ENCODE measurements at regions of chr11 and their contacts with region 1.

Region 1: DNA sequence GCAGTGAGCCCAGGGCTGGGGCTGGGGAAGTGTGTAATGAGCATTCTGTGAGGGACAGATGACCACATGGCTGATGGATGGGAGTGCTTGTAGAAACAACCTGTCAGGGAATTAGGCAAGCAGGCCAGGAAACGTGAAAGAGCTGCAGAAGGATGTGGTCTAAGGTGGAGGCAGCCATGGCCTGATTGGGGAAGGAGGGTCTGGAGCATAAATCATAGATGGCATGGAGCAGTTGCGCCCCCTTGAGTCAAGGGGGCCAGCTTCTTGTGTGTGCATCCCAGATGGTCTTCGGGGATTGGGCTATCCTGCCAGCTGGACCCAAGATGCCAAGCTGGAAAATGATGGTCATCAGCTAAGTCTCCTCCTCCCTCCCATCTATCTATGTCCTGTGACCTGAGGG is 119.4 kb upstream of the CLPB start:
- DNase-seq: no peak
- H3K4me3 ChIP-seq: no peak overlapping the region
- H3K27ac ChIP-seq: no peak overlapping the region
- H3K4me1 ChIP-seq: no peaks in the 10 kb centered on the region
- H3K27me3 ChIP-seq: peaks cover 15% of the 10 kb centered on the region
- CTCF ChIP-seq: no peak

Region 2: GRCh38 chr11:72642884-72643511 is 89.3 kb after region 1 on chr11:
- CTCF ChIA-PET with region 1: no interaction called
- POLR2A ChIA-PET with region 1: no interaction called
- intact Hi-C with region 1: no loop called
- DNase-seq: peak in 1 of 2 experiments; percentile 71
- H3K4me3 ChIP-seq: peak overlapping the region; percentile 74
- H3K27ac ChIP-seq: no peak overlapping the region
- H3K4me1 ChIP-seq: peaks cover 17% of the 10 kb centered on the region
- H3K27me3 ChIP-seq: peaks cover 16% of the 10 kb centered on the region
- CTCF ChIP-seq: peak; percentile 94

Region 3: GRCh38 chr11:73833067-73833466 is 1279.4 kb after region 1 on chr11:
- CTCF ChIA-PET with region 1: no interaction called
- POLR2A ChIA-PET with region 1: interaction called, 26 read pairs
- intact Hi-C with region 1: no loop called
- DNase-seq: no peak
- H3K4me3 ChIP-seq: no peak overlapping the region
- H3K27ac ChIP-seq: no peak overlapping the region
- H3K4me1 ChIP-seq: no peaks in the 10 kb centered on the region
- H3K27me3 ChIP-seq: no peaks in the 10 kb centered on the region
- CTCF ChIP-seq: no peak